ENCODE measurements at regions of chr4 and their contacts with region 1.

Region 1: GRCh38 chr4:78864405-78865024 is 74.7 kb downstream of the PAQR3 start:
- DNase-seq: no peak

Region 2: DNA sequence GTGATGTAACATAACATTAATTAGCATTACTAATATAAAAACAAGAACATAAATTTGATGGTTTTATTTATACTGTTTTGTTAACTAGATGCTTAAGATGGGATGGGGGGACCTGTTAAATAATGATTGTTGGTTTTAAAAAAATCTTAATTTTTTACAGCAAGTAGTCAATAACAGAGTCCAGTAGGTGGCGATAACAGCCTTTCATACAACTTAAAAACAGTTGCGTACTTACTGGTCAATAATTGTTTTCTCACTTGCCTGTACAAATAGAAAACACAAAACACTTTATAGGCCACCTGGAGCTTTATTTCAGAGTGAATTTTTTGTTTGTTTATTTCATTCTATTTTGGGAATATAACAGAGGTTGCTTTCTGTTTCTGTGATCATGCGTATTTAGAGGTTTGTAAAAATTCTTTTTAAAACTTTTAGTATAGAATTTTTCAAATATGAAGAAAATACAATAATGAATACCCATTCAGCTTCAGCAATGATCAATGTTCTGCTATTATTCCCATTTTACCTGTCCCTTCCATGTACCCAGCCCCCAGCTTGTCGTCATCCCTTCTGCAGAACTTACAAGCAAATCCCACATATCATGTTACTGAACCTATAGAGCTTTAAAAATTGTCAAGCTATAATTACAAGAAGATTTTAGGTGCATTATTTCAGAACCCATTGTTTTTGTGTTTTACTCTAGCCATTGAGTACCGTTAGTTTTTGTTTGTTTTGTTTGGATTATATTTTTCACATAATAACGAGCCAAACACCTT is 904.8 kb before region 1 on chr4:
- intact Hi-C with region 1: loop called (anchors 10 kb)
- DNase-seq: no peak

Region 3: GRCh38 chr4:78612398-78613178 is 251.9 kb before region 1 on chr4:
- intact Hi-C with region 1: loop called (anchors 1 kb)
- DNase-seq: peak in 2 of 10 donors; percentile 19 to 57

Region 4: DNA sequence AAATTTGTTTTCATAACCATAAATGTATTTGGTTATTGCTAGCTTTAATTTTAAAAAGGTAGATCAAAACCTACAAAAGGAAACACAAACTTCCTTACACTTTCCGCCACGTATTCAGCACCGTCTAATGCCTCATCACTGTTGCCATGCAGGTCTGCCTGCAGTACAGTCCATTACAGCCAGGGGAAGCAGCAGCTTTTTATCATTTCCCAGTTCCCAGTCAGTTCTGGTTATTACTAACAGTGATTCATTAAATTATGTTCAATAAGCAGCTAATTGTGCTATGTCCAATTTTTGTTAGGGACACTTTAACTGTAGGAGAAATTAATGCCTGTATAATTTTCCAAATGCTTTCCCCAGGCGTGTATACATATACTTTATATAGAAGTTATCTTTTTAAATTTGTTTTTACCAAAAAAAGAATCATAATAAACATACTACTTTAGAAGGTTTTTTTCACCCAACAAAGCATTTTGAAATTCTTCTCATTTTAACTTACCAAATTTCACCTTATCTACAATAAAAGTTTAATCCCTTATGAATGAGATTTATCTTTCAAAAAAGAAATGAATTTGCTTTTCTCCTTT is 219.7 kb before region 1 on chr4:
- intact Hi-C with region 1: loop called (anchors 10 kb)
- DNase-seq: peak in 6 of 10 donors; percentile 30 to 80 (median 50)

Region 5: DNA sequence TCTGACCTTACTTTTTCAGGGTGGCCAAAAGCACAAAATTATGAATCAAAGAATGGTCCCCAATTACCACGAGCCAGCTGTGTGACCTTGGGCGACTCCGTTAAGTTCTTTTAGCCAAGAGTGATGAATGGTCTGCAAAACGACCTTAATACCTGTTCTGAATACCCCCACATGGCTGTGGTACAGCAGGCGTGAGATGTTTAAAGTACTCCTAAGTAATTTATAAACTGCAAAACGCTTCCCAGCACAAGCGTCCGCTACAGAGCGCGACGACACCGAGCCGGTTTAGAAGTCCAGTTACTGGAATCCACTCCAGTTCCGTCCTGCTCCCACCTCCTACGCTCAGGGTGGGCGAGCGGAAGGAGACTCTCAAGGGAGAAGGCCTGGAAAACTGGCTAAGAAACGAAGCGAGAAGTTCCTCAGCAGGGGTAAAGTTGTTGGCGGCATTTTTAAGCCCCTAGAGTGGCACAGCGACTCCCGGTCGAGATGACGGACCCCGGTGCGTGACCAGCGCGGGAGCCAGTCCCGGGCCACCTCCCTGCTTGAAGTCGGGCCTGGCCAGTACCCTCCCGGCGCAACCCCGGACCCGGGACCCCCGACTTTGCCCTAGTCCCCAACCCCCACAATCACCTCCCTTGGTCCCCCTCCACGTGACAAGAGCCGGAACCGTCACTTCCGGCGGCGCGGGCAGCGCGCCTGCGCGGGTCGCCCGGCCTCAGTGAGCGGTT is 89.0 kb before region 1 on chr4:
- intact Hi-C with region 1: loop called (anchors 5 kb)
- DNase-seq: peak; percentile 80 to 98 (median 85)

Region 6: DNA sequence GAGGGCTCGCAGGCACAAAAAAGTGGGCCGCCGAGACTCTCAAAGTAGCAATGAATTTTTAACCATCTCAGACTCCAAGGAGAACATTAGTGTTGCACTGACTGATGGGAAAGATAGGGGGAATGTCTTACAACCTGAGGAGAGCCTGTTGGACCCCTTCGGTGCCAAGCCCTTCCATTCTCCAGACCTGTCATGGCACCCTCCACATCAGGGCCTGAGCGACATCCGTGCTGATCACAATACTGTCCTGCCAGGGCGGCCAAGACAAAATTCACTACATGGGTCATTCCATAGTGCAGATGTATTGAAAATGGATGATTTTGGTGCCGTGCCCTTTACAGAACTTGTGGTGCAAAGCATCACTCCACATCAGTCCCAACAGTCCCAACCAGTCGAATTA is 47.1 kb after region 1 on chr4:
- intact Hi-C with region 1: no loop called
- DNase-seq: peak in 1 of 10 donors; percentile 15

Measured in posterior cingulate gyrus (tissue), 11 donors.